Activated CD4-positive, alpha-beta T cell treated with anti-CD3 and anti-CD28 coated beads, Interleukin-2, amount 10 ng/mL, durations not matched to agents 7 days and 5 days (primary cell): ENCODE measurements at regions of chr12 and their contacts with region 1.

Region 1: GRCh38 chr12:12736759-12737676 is 19.9 kb downstream of the CDKN1B start:
- DNase-seq: peak; percentile 67
- H3K4me3 Mint-ChIP-seq: peak overlapping the region; percentile 56
- H3K27ac Mint-ChIP-seq: peak overlapping the region; percentile 93
- H3K4me1 Mint-ChIP-seq: peaks cover 71% of the 10 kb centered on the region
- H3K27me3 Mint-ChIP-seq: no peaks in the 10 kb centered on the region

Region 2: DNA sequence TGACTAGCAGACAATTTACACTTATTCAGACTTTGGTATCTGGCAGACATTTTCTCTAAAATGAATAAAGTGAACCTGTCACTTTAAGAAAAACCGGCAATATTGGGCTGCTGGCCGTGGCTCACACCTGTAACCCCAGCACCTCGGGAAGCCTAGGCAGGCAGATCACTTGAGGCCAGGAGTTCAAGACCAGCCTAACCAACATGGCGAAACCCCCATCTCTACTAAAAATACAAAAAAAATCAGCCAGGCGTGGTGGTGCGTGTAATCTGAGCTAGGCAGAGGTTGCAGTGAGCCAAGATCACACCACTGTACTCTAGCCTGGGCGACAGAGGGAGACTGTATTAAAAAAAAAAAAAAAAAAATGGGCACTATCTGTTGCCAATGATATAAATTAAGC is 185.9 kb before region 1 on chr12:
- CTCF ChIA-PET with region 1: no interaction called
- POLR2A ChIA-PET with region 1: interaction called, 11 read pairs
- DNase-seq: no peak
- H3K4me3 Mint-ChIP-seq: no peak overlapping the region
- H3K27ac Mint-ChIP-seq: no peak overlapping the region
- H3K4me1 Mint-ChIP-seq: peaks cover 15% of the 10 kb centered on the region
- H3K27me3 Mint-ChIP-seq: no peaks in the 10 kb centered on the region

Region 3: DNA sequence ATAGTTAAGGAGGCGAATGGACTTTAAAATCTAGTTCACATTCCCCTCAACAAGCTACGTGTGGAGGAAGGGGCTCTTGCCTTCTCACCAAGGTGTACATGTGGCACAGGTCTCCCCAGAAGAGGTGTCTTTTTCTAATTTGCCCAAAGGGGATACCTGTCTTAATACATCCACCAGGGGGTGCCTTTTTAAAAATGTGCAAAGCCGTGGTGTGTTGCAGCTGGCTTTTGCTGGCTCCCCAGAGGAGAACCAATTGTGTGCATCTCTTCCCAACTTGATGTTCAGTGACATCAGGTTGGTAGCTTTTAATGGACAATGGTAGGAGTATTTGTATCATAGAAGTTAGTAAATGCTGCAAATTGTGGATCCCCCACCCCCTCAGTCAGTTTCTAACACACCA is 91.5 kb before region 1 on chr12:
- CTCF ChIA-PET with region 1: interaction called, 13 read pairs
- POLR2A ChIA-PET with region 1: no interaction called
- DNase-seq: peak; percentile 41
- H3K4me3 Mint-ChIP-seq: no peak overlapping the region
- H3K27ac Mint-ChIP-seq: peak overlapping the region; percentile 54
- H3K4me1 Mint-ChIP-seq: peaks cover 8% of the 10 kb centered on the region
- H3K27me3 Mint-ChIP-seq: no peaks in the 10 kb centered on the region

Region 4: GRCh38 chr12:12716793-12717585 is 20.0 kb before region 1 on chr12 and contains the start of gene CDKN1B:
- CTCF ChIA-PET with region 1: interaction called, 25 read pairs
- POLR2A ChIA-PET with region 1: interaction called, 16 read pairs
- DNase-seq: peak; percentile 91
- H3K4me3 Mint-ChIP-seq: peak within 1 kb of the TSS; percentile 97
- H3K27ac Mint-ChIP-seq: peak within 1 kb of the TSS; percentile 99
- H3K4me1 Mint-ChIP-seq: peaks cover 40% of the 10 kb centered on the region
- H3K27me3 Mint-ChIP-seq: no peaks in the 10 kb centered on the region
- total RNA-seq, gene CDKN1B: 105 to 117 TPM

Region 5: DNA sequence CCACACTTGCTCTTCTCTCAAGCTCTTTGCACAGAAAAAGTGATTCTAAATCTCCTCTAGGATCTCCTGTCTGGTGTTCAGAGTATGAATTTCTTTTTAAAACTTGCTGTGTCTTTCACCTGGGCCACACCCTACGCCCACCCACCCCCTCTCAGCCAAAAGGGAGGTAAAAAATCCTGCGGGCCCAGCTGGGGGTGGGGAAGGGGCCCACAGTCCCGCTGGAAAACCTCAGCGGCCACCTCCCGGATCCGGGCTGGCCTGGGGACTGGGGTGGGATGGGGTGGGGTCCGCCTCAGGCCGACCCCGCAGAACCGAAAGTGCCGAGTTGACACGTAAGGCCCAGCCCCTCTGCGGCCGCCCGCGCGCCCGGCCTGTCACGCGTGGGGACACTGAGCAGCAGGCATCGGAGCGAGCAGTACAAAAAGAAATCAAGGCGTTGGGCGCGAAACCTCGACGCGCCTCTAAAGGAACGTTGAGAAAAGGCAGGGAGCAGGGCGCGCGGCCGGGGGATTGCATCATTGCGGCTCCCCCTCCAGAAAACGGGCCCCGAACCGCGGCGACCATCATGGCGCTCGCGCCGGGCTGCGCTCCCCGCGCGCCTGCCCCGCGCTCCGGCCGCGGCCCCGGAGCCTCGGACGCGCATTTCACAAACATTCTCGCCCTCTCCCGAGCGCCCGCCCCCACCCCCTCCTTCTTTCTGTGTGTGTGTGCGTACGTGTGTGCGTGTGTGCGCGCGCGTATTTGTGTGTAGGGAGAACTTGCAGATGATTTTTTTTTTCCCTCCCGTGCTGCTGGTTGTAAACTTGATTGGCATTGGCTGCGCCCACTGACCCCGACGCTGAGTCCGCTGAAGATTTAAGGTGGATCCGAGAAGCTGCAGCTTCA is 12.1 kb before region 1 on chr12:
- CTCF ChIA-PET with region 1: interaction called, 25 read pairs
- POLR2A ChIA-PET with region 1: interaction called, 25 read pairs
- DNase-seq: peak; percentile 93
- H3K4me3 Mint-ChIP-seq: peak overlapping the region; percentile 95
- H3K27ac Mint-ChIP-seq: peak overlapping the region; percentile 98
- H3K4me1 Mint-ChIP-seq: peaks cover 28% of the 10 kb centered on the region
- H3K27me3 Mint-ChIP-seq: no peaks in the 10 kb centered on the region